PC-9 (cell line): ENCODE measurements at regions of chr1 and their contacts with region 1.

Region 1: GRCh38 chr1:230642263-230642959 is at the start of gene COG2:
- DNase-seq: peak; percentile 79 to 96
- H3K4me3 ChIP-seq: peak within 1 kb of the TSS; percentile 78
- H3K27ac ChIP-seq: peak within 1 kb of the TSS; percentile 39
- H3K4me1 ChIP-seq: peaks cover 18% of the 10 kb centered on the region
- H3K27me3 ChIP-seq: peaks cover 38% of the 10 kb centered on the region
- CTCF ChIP-seq: peak; percentile 98
- total RNA-seq, gene COG2: 21.5 and 24.3 TPM in 2 replicates

Region 2: DNA sequence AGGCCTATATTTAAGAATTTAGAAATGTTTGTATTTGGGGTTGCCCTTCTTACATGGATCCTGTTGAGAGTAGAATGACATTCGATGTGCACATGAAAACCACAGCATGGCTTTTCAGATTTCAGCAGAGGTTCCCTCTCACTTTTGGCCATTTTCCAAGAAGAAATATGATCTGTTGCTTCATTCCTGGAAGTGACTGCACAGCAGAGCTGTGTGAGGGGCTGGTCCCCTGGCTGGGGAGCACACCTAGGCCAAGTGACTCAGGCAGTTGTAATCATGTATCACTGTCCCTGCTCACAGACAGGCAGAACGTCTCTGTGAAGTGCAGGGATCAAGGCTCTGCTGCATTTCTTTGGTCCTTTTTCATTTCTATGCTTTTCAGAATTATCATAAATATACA is 39.2 kb after region 1 on chr1:
- CTCF ChIA-PET with region 1: no interaction called
- POLR2A ChIA-PET with region 1: interaction called, 7 read pairs
- intact Hi-C with region 1: loop called (anchors 1 kb)
- DNase-seq: peak; percentile 69 to 84
- H3K4me3 ChIP-seq: no peak overlapping the region
- H3K27ac ChIP-seq: no peak overlapping the region
- H3K4me1 ChIP-seq: peaks cover 42% of the 10 kb centered on the region
- H3K27me3 ChIP-seq: no peaks in the 10 kb centered on the region
- CTCF ChIP-seq: no peak

Region 3: DNA sequence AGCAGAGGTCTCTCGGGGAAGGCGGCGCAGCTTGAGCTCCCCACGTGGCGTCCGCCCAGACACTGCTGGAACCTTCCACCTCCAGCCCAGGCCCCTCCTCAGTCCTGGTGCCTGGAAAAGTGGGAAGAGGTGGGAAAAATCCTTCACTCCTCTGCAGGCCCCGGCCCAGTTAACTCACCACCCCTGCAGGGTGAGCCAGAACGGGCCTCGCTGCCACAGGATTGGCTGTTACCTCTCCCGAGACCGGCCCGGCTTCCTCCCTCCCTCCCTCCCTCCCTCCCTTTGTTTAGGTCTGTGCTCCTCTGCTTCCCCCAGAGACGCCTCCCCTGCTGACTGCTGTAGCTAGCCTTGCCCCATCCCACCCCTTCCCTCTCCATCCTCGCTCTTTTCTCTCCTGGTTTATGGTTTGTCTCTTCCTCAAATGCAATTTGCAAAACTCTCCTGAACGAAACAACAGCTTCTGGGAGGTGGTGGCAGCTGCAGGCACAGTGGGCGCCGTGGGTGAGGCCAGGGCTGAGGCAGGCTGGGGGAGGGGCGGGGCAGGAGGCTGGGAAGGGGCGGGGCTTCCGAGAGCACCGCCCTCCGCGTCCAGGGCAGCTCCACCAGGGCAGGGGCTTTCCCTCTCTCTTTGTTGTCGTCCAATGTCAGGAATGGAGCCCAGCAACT is 111.3 kb after region 1 on chr1:
- CTCF ChIA-PET with region 1: interaction called, 4 read pairs
- POLR2A ChIA-PET with region 1: interaction called, 4 read pairs
- intact Hi-C with region 1: loop called (anchors 5 kb)
- DNase-seq: no peak
- H3K4me3 ChIP-seq: no peak overlapping the region
- H3K27ac ChIP-seq: no peak overlapping the region
- H3K4me1 ChIP-seq: peaks cover 39% of the 10 kb centered on the region
- H3K27me3 ChIP-seq: no peaks in the 10 kb centered on the region
- CTCF ChIP-seq: no peak

Region 4: GRCh38 chr1:230772457-230773395 is 130.3 kb after region 1 on chr1:
- CTCF ChIA-PET with region 1: interaction called, 3 read pairs
- POLR2A ChIA-PET with region 1: no interaction called
- intact Hi-C with region 1: loop called (anchors 2 kb)
- DNase-seq: peak; percentile 24 to 52
- H3K4me3 ChIP-seq: no peak overlapping the region
- H3K27ac ChIP-seq: no peak overlapping the region
- H3K4me1 ChIP-seq: peaks cover 11% of the 10 kb centered on the region; the same call in 1 of the 2 replicates
- H3K27me3 ChIP-seq: peaks cover 30% of the 10 kb centered on the region
- CTCF ChIP-seq: peak; percentile 61

Region 5: GRCh38 chr1:230867903-230868735 is 225.7 kb after region 1 on chr1 and contains the start of gene C1orf198:
- CTCF ChIA-PET with region 1: no interaction called
- POLR2A ChIA-PET with region 1: no interaction called
- intact Hi-C with region 1: loop called (anchors 5 kb)
- DNase-seq: peak in 1 of 2 experiments; percentile 75
- H3K4me3 ChIP-seq: peak within 1 kb of the TSS; percentile 78
- H3K27ac ChIP-seq: peak within 1 kb of the TSS; percentile 61
- H3K4me1 ChIP-seq: peaks cover 37% of the 10 kb centered on the region
- H3K27me3 ChIP-seq: no peaks in the 10 kb centered on the region
- CTCF ChIP-seq: no peak; the same call in 1 of the 2 replicates
- total RNA-seq, gene C1orf198: 20.5 and 24.5 TPM in 2 replicates

Region 6: DNA sequence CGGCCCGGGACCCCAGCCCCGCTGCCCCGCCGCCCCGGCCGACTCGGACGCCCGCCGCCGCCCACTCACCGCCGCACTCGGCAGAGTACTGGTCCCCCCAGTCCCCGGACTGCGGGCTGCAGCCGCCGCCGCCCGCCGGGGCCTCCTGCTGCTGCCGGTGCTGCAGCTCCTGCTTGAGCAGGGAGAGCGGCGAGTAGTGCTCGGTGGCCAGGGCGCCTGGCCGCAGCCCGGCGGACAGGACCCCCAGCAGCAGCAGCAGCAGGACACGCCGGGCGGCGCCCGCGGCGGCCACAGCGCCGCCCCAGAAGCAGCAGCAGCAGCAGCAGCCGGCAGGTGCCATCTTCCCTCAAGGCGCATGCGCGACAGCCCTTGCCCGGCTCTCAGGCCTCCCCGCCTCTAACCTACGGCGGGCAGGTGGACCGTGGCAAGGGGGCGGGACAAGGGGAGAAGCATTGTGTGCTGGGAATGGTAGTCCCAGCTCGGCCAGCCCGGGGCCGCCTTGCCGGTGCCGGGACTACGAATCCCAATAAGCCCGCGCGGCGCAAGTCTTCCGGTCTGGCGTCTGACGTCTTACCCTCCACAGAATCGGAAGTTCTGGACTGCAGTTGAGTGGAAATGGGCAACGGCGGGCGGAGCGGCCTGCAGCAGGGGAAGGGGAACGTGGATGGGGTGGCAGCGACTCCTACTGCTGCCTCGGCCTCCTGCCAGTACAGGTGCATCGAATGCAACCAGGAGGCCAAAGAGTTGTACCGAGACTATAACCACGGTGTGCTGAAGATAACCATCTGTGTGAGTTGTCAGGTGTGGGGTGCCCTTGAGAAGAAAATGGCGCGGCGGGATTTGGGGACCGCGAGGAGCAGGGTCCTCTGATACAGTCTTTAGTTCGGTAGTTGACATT is 336.3 kb after region 1 on chr1 and contains the starts of genes ARV1 and TTC13:
- CTCF ChIA-PET with region 1: no interaction called
- POLR2A ChIA-PET with region 1: no interaction called
- intact Hi-C with region 1: loop called (anchors 1 kb)
- DNase-seq: peak; percentile 97 to 98
- H3K4me3 ChIP-seq: peak within 1 kb of the TSS; percentile 86
- H3K27ac ChIP-seq: no peak within 1 kb of the TSS
- H3K4me1 ChIP-seq: peaks cover 19% of the 10 kb centered on the region
- H3K27me3 ChIP-seq: no peaks in the 10 kb centered on the region
- CTCF ChIP-seq: peak; percentile 50; the same call in 1 of the 2 replicates
- total RNA-seq, gene ARV1: 8.0 and 12.0 TPM in 2 replicates
- total RNA-seq, gene TTC13: 7.5 and 10.7 TPM in 2 replicates

Region 7: GRCh38 chr1:231070758-231071444 is 428.5 kb after region 1 on chr1:
- CTCF ChIA-PET with region 1: no interaction called
- POLR2A ChIA-PET with region 1: no interaction called
- intact Hi-C with region 1: no loop called
- DNase-seq: no peak
- H3K4me3 ChIP-seq: no peak overlapping the region
- H3K27ac ChIP-seq: no peak overlapping the region
- H3K4me1 ChIP-seq: no peaks in the 10 kb centered on the region
- H3K27me3 ChIP-seq: peaks cover 61% of the 10 kb centered on the region
- CTCF ChIP-seq: no peak

Region 8: DNA sequence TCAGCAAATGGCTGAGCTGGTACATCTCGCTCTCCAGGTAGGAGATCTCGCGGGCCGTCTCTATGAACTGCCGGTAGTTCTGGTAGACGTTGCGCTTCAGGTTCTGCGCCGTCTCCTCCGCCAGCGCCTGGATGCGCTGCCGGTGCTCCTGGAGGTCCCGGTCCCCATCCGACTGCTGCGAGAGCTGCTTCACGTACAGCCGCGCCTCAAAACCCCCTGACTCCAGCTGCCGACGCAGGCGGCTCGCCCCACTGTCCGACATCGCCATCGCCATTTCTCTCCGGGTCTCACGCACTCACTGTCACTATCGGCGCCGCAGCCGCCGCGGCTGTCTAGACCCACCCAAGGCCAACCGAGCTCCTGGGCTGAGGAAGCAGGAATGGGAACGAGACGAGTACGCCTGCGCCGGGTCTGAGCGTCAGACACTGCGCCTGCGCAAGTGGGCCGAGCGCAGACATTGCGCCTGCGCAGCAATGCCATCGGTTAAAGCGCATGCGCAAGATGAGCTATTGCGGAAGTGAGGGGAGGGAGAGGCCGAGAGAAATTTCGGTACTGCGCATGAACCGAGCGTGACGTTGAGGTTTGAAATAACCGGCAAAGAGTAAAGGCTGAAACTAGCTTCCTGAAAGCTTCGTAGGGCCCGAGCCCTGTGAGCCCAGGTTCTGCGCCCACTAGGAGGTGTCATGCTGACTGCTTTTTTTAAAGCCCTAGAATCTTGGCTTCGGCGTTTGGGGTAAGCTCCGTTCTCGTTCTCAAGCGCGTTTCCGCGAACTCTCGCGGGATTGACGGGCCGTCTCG is 695.3 kb after region 1 on chr1 and contains the start of gene EXOC8:
- CTCF ChIA-PET with region 1: interaction called, 3 read pairs
- POLR2A ChIA-PET with region 1: no interaction called
- intact Hi-C with region 1: loop called (anchors 10 kb)
- DNase-seq: peak; percentile 92 to 98
- H3K4me3 ChIP-seq: peak within 1 kb of the TSS; percentile 72
- H3K27ac ChIP-seq: peak within 1 kb of the TSS; percentile 89
- H3K4me1 ChIP-seq: peaks cover 51% of the 10 kb centered on the region
- H3K27me3 ChIP-seq: no peaks in the 10 kb centered on the region
- CTCF ChIP-seq: no peak
- total RNA-seq, gene EXOC8: 11.2 and 12.1 TPM in 2 replicates